Calu3 (cell line): ENCODE measurements at regions of chr3 and their contacts with region 1.

Region 1: DNA sequence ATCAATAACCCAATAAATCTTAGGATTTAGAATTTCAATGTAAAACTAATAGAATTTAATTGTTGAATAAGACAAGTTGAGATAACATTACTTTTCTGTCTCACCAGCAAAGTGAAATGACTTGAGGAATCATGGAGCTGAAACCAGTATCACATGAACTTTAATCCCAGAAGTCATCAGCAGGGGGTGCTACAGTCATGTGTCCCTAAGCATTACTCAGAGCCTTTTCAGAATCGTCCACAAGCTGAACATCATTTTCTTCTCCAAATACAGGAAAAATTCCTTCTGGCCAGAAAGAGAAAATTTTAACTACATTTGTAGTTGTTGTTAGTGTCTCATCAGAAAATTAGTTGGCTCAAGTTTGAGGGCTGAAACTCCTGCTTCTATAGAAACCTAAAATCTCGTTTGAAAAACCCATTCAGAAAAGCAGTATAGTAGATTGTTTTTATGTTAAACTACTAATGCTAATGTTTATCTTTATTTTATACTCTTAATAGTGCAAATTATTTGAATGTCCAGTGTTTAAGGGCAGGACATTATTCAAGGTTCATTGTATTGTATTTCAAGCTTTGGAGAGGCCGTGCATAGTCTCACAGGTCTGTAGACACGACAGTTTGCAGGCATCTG is 384.1 kb downstream of the PLOD2 start:
- DNase-seq: peak; percentile 84
- H3K4me3 Mint-ChIP-seq: no peak overlapping the region
- H3K27ac Mint-ChIP-seq: no peak overlapping the region
- H3K4me1 Mint-ChIP-seq: no peaks in the 10 kb centered on the region
- H3K27me3 Mint-ChIP-seq: no peaks in the 10 kb centered on the region
- CTCF ChIP-seq: peak; percentile 83

Region 2: GRCh38 chr3:145915795-145916194 is 138.9 kb after region 1 on chr3:
- CTCF ChIA-PET with region 1: interaction called, 10 read pairs
- intact Hi-C with region 1: loop called (anchors 1 kb)
- DNase-seq: peak; percentile 24
- H3K4me3 Mint-ChIP-seq: no peak overlapping the region
- H3K27ac Mint-ChIP-seq: no peak overlapping the region
- H3K4me1 Mint-ChIP-seq: no peaks in the 10 kb centered on the region
- H3K27me3 Mint-ChIP-seq: no peaks in the 10 kb centered on the region
- CTCF ChIP-seq: no peak

Region 3: DNA sequence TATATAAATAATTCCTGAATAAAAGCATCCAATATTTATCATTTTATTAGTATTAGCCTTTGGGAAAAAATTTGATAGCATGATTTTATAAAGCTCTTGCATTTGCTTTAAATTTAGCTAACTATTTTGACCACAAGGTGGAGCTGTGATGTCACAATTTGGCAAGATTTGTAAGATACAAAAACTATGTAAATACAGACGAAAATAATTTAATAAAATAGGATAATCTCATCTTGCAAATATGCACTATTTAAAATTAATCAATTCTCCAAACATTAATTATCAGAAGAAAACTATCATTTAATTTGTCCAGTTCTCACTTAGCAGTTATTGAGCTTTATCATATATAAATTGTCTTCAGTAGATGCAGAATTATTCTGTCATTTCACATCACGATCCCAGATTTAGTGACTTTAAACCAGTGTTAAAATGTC is 288.7 kb after region 1 on chr3:
- CTCF ChIA-PET with region 1: interaction called, 7 read pairs
- intact Hi-C with region 1: loop called (anchors 2 kb)
- DNase-seq: peak; percentile 62
- H3K4me3 Mint-ChIP-seq: no peak overlapping the region
- H3K27ac Mint-ChIP-seq: no peak overlapping the region
- H3K4me1 Mint-ChIP-seq: peaks cover 8% of the 10 kb centered on the region
- H3K27me3 Mint-ChIP-seq: no peaks in the 10 kb centered on the region
- CTCF ChIP-seq: peak; percentile 74

Region 4: GRCh38 chr3:146189519-146190173 is 412.8 kb after region 1 on chr3:
- CTCF ChIA-PET with region 1: interaction called, 17 read pairs
- intact Hi-C with region 1: loop called (anchors 1 kb)
- DNase-seq: peak; percentile 57
- H3K4me3 Mint-ChIP-seq: peak overlapping the region; percentile 26
- H3K27ac Mint-ChIP-seq: peak overlapping the region; percentile 66
- H3K4me1 Mint-ChIP-seq: peaks cover 14% of the 10 kb centered on the region
- H3K27me3 Mint-ChIP-seq: no peaks in the 10 kb centered on the region
- CTCF ChIP-seq: peak; percentile 81

Region 5: DNA sequence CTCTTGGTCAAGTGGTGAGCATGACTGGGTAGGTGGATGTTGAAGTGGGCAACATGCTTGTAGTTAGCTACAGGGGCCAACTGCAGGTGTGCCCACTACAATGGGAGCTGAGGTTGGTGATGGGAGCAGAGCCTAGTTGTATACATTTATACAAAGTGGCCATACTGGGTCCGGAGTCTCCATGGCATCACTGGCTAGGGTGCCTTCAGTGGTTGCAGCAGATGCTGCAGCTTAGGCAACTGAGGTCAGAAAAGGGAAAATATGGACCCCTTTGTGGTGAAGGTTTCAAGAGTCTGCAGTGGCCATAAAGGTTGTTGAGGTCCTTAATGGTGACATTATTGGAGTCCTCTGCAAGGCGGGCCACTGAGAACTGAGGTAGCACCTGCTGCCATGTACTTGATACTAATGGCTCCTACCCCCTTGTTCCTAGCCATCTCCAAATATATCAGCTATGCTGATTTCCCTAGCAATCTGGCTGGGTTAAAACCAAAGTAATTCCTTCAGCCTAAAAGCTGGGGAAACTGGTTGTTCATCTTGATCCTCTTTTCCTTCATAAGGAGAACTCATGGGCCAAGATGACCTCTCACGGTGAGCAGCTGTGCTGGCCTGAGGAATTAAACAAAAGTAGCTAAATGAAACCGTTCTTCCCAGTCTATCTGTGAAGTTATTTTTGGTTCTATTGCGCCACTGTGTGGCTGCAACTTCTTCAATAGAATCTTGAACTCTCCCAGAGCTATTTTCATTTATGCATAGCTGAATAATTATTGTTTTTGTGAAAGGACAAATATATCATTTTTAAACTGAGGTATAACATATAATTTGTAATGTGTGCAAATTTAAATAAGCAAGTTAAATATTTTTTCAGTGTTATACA is 550.0 kb after region 1 on chr3:
- CTCF ChIA-PET with region 1: interaction called, 7 read pairs
- intact Hi-C with region 1: loop called (anchors 2 kb)
- DNase-seq: peak; percentile 55
- H3K4me3 Mint-ChIP-seq: no peak overlapping the region
- H3K27ac Mint-ChIP-seq: no peak overlapping the region
- H3K4me1 Mint-ChIP-seq: no peaks in the 10 kb centered on the region
- H3K27me3 Mint-ChIP-seq: no peaks in the 10 kb centered on the region
- CTCF ChIP-seq: peak; percentile 60

Region 6: GRCh38 chr3:147327849-147328248 is 1551.0 kb after region 1 on chr3:
- CTCF ChIA-PET with region 1: no interaction called
- intact Hi-C with region 1: no loop called
- DNase-seq: no peak
- H3K4me3 Mint-ChIP-seq: no peak overlapping the region
- H3K27ac Mint-ChIP-seq: no peak overlapping the region
- H3K4me1 Mint-ChIP-seq: no peaks in the 10 kb centered on the region
- H3K27me3 Mint-ChIP-seq: no peaks in the 10 kb centered on the region
- CTCF ChIP-seq: no peak